ENCODE measurements at regions of chr3 and their contacts with region 1.

Region 1: GRCh38 chr3:100708967-100709841 is at the start of gene TFG:
- DNase-seq: peak; percentile 94 to 98 (median 96)
- ATAC-seq: peak; percentile 95
- H3K4me3 ChIP-seq: peak within 1 kb of the TSS; percentile 68
- H3K4me3 Mint-ChIP-seq: peak within 1 kb of the TSS; percentile 85 to 98 (median 94)
- H3K27ac ChIP-seq: peak within 1 kb of the TSS; percentile 90
- H3K27ac Mint-ChIP-seq: peak within 1 kb of the TSS; percentile 95 to 99 (median 98)
- H3K4me1 ChIP-seq: peaks cover 19 to 21% of the 10 kb centered on the region in 2 donors
- H3K4me1 Mint-ChIP-seq: peaks cover 32 to 50% (median 47%) of the 10 kb centered on the region in 7 donors
- H3K27me3 ChIP-seq: no peaks in the 10 kb centered on the region
- H3K27me3 Mint-ChIP-seq: peaks cover 0 to 14% (median 6%) of the 10 kb centered on the region in 5 donors
- total RNA-seq, gene TFG: 40.8 to 72.2 (median 45.6) TPM

Region 2: DNA sequence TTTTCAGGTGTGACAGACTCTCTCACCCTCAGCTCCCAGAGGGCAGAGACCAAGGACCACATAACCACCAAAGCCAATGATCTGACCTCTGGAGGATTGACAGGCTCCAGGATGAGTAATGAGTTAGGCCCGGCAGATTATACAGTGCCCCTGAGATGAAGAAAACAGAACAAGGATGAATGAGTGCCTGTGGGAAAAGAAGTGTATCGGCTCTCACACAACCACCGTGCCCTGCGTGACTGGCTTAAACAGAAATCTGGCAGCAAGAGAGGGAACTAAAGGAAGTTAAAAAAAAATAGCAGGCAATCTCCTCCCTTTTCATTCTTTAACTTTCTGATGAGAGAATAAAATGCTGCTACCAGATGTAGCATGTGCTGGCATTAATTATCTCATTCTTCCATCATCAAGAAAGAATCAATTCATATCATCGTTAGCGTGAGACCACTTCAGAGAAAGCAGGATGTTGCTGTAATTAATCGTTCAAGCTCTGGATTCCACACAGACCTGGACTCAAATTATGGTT is 1298.4 kb before region 1 on chr3:
- CTCF ChIA-PET with region 1: no interaction called
- POLR2A ChIA-PET with region 1: no interaction called
- intact Hi-C with region 1: no loop called
- DNase-seq: no peak
- ATAC-seq: no peak
- H3K4me3 ChIP-seq: no peak overlapping the region
- H3K4me3 Mint-ChIP-seq: no peak overlapping the region
- H3K27ac ChIP-seq: no peak overlapping the region
- H3K27ac Mint-ChIP-seq: no peak overlapping the region
- H3K4me1 ChIP-seq: no peaks in the 10 kb centered on the region
- H3K4me1 Mint-ChIP-seq: no peaks in the 10 kb centered on the region
- H3K27me3 ChIP-seq: no peaks in the 10 kb centered on the region
- H3K27me3 Mint-ChIP-seq: peaks cover 0 to 9% (median 0%) of the 10 kb centered on the region in 5 donors

Region 3: GRCh38 chr3:100316641-100317069 is 392.5 kb before region 1 on chr3:
- CTCF ChIA-PET with region 1: no interaction called
- POLR2A ChIA-PET with region 1: no interaction called
- intact Hi-C with region 1: loop called in 1 of 2 experiments (anchors 1 kb)
- DNase-seq: peak in 7 of 9 donors; percentile 13 to 60 (median 54)
- ATAC-seq: peak; percentile 95
- H3K4me3 ChIP-seq: no peak overlapping the region
- H3K4me3 Mint-ChIP-seq: peak overlapping the region in 6 of 10 donors; percentile 32 to 67 (median 50)
- H3K27ac ChIP-seq: no peak overlapping the region
- H3K27ac Mint-ChIP-seq: peak overlapping the region in 6 of 9 donors; percentile 57 to 87 (median 70)
- H3K4me1 ChIP-seq: no peaks in the 10 kb centered on the region
- H3K4me1 Mint-ChIP-seq: peaks cover 0 to 19% (median 14%) of the 10 kb centered on the region in 7 donors
- H3K27me3 ChIP-seq: no peaks in the 10 kb centered on the region
- H3K27me3 Mint-ChIP-seq: no peaks in the 10 kb centered on the region

Region 4: GRCh38 chr3:100603469-100603868 is 105.7 kb before region 1 on chr3:
- CTCF ChIA-PET with region 1: no interaction called
- POLR2A ChIA-PET with region 1: no interaction called
- intact Hi-C with region 1: loop called in 1 of 2 experiments (anchors 1 kb)
- DNase-seq: peak in 1 of 9 donors; percentile 2
- ATAC-seq: peak; percentile 40
- H3K4me3 ChIP-seq: peak overlapping the region; percentile 28
- H3K4me3 Mint-ChIP-seq: peak overlapping the region; percentile 47 to 77 (median 66)
- H3K27ac ChIP-seq: no peak overlapping the region
- H3K27ac Mint-ChIP-seq: peak overlapping the region in 7 of 9 donors; percentile 0 to 89 (median 39)
- H3K4me1 ChIP-seq: peaks cover 0 to 17% of the 10 kb centered on the region in 2 donors
- H3K4me1 Mint-ChIP-seq: peaks cover 19 to 41% (median 32%) of the 10 kb centered on the region in 7 donors
- H3K27me3 ChIP-seq: no peaks in the 10 kb centered on the region
- H3K27me3 Mint-ChIP-seq: peaks cover 0 to 9% (median 0%) of the 10 kb centered on the region in 5 donors

Region 5: GRCh38 chr3:100730524-100730923 is 21.3 kb after region 1 on chr3:
- CTCF ChIA-PET with region 1: interaction called, 4 read pairs
- POLR2A ChIA-PET with region 1: interaction called, 3 read pairs
- intact Hi-C with region 1: loop called in 1 of 2 experiments (anchors 2 kb)
- DNase-seq: no peak
- ATAC-seq: no peak
- H3K4me3 ChIP-seq: no peak overlapping the region
- H3K4me3 Mint-ChIP-seq: no peak overlapping the region
- H3K27ac ChIP-seq: no peak overlapping the region
- H3K27ac Mint-ChIP-seq: peak overlapping the region in 2 of 9 donors; percentile 1 to 4
- H3K4me1 ChIP-seq: no peaks in the 10 kb centered on the region
- H3K4me1 Mint-ChIP-seq: peaks cover 5 to 36% (median 26%) of the 10 kb centered on the region in 7 donors
- H3K27me3 ChIP-seq: no peaks in the 10 kb centered on the region
- H3K27me3 Mint-ChIP-seq: no peaks in the 10 kb centered on the region

Region 6: GRCh38 chr3:101724329-101725193 is 1015.4 kb after region 1 on chr3 and contains the start of gene CEP97:
- CTCF ChIA-PET with region 1: no interaction called
- POLR2A ChIA-PET with region 1: no interaction called
- intact Hi-C with region 1: loop called in 1 of 2 experiments (anchors 1 kb)
- DNase-seq: peak; percentile 70 to 90 (median 88)
- ATAC-seq: peak; percentile 98
- H3K4me3 ChIP-seq: peak within 1 kb of the TSS; percentile 91
- H3K4me3 Mint-ChIP-seq: peak within 1 kb of the TSS; percentile 88 to 100 (median 98)
- H3K27ac ChIP-seq: peak within 1 kb of the TSS; percentile 82
- H3K27ac Mint-ChIP-seq: peak within 1 kb of the TSS; percentile 91 to 98 (median 97)
- H3K4me1 ChIP-seq: peaks cover 25 to 30% of the 10 kb centered on the region in 2 donors
- H3K4me1 Mint-ChIP-seq: peaks cover 26 to 57% (median 44%) of the 10 kb centered on the region in 7 donors
- H3K27me3 ChIP-seq: no peaks in the 10 kb centered on the region
- H3K27me3 Mint-ChIP-seq: no peaks in the 10 kb centered on the region
- total RNA-seq, gene CEP97: 5.5 to 21.7 (median 10.9) TPM

Measured in naive thymus-derived CD4-positive, alpha-beta T cell (primary cell).